GM12878 (cell line): ENCODE measurements at regions of chr18 and their contacts with region 1.

Region 1: GRCh38 chr18:3151399-3152264 is 68.1 kb downstream of the MYOM1 start:
- DNase-seq: no peak
- ATAC-seq: no peak
- H3K4me3 ChIP-seq: no peak overlapping the region
- H3K27ac ChIP-seq: no peak overlapping the region
- H3K4me1 ChIP-seq: peaks cover 12% of the 10 kb centered on the region
- H3K27me3 ChIP-seq: no peaks in the 10 kb centered on the region
- CTCF ChIP-seq: peak; percentile 56 to 72 (median 69); a peak in 5 of 6 replicates
- EP300 ChIP-seq: no peak
- POLR2A ChIP-seq: no peak
- RAD21 ChIP-seq: peak; percentile 78

Region 2: DNA sequence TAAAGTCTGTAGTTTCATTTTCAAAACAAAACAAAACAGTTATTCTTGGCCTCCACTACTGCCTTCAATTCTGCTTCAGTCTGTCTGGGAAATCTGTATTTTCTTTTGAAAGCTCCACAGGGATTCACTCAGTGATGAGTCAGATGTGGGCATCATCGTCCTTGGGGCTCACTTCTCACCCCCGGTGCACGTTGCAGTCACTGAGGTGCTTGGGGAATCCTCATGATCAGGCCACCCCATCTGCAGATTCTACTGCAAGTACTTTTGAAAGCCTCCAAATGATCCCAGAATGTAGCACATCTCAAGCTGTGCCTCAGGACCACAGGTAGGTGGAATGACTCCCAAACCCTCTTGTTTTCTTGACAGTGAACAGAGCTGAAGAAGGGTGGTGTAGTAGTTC is 173.0 kb before region 1 on chr18:
- CTCF ChIA-PET with region 1: interaction called, 11 read pairs
- POLR2A ChIA-PET with region 1: no interaction called
- RAD21 ChIA-PET with region 1: no interaction called
- SMC1A ChIA-PET with region 1: interaction called, 4 read pairs
- in situ Hi-C with region 1: no loop called
- intact Hi-C with region 1: no loop called
- DNase-seq: no peak
- ATAC-seq: peak; percentile 16
- H3K4me3 ChIP-seq: peak overlapping the region; percentile 41; the same call in 1 of the 2 replicates
- H3K27ac ChIP-seq: peak overlapping the region; percentile 70
- H3K4me1 ChIP-seq: peaks cover 41% of the 10 kb centered on the region
- H3K27me3 ChIP-seq: no peaks in the 10 kb centered on the region
- CTCF ChIP-seq: no peak
- EP300 ChIP-seq: no peak
- POLR2A ChIP-seq: no peak
- RAD21 ChIP-seq: no peak

Region 3: DNA sequence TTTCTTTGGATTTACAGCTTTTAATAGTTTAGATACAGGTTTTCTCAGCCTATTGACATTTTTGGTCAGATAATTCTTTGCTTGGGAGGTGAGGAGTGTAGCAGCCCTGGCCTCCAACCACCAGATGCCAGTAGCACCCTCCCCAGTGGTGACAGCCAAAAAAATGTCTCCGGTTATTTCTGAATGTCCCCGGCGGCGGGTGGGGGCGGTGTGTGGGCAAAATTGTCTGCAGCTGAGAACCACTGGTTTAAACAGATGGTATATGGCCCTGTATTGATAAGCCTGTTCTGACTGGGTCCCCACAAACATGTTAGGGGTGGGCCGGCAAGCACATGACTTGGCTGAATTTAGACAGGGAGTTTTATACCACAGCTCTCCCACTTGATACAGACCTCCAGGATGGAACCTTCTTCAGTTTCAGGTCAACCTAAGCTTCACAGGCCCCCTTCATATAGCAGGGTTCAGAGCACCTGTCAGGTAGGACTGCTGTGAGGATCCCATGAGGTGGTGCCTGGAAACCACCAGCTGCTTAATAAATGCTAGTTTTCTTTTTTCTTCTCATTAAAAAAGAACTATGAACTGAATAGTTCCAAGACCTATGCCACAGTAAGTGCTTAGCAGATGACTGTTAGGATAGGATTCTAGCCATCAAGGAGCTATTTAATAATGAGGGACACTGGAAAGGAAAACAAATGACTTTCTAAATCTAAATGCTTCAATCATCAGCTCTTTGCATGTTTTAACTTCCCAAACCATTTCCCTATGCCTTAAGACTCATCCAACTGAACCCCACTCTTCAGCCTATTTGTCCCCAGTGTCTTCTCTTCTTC is 156.8 kb before region 1 on chr18:
- CTCF ChIA-PET with region 1: interaction called, 36 read pairs
- POLR2A ChIA-PET with region 1: no interaction called
- RAD21 ChIA-PET with region 1: interaction called, 26 read pairs
- SMC1A ChIA-PET with region 1: interaction called, 38 read pairs
- in situ Hi-C with region 1: no loop called
- intact Hi-C with region 1: loop called (anchors 5 kb)
- DNase-seq: no peak
- ATAC-seq: peak; percentile 93
- H3K4me3 ChIP-seq: no peak overlapping the region
- H3K27ac ChIP-seq: peak overlapping the region; percentile 53; the same call in 1 of the 2 replicates
- H3K4me1 ChIP-seq: peaks cover 33% of the 10 kb centered on the region
- H3K27me3 ChIP-seq: no peaks in the 10 kb centered on the region
- CTCF ChIP-seq: peak; percentile 69 to 71 (median 70)
- EP300 ChIP-seq: no peak
- POLR2A ChIP-seq: no peak
- RAD21 ChIP-seq: peak; percentile 84

Region 4: DNA sequence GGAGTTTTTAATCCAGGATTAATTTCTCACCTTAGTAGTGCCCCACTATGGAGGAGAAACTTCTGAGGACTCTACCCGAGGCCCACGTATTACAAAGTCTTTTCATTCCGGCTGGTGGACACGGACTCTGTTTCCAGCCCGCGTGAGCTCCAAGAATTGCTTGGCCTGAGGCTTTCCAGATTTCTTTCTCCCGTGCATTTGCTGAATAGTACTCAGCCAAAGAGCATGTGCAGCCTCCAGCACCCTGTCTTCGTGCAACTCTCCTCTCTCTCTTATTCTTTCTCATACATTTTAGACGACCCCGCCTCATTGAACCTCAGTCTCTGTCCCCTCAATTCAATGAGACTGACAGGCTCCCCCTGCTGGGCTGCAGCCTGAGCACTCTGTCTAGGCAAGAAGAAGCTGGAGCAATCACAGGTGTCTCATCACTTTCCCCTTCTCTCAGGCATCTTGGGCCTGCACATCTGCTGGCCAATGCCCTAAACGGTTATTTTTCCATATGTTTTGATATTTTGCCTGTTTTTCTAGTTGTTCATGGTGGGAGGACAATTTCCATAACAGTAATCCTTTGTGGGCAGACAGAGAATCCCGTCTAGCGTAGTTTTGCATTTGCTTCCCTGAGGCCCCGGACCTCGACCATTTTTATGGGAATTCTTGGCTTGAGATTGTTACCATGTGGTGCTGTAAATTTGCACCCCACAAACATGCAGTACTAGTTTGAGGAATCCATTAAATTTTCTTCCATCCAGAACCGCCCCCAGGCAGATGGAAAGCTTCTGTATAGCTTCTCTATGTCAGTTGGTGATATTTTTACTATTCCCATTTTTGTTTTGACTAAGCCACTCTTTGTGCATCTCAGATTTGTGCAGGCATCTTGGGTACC is 88.6 kb before region 1 on chr18:
- CTCF ChIA-PET with region 1: interaction called, 10 read pairs
- POLR2A ChIA-PET with region 1: no interaction called
- RAD21 ChIA-PET with region 1: interaction called, 7 read pairs
- SMC1A ChIA-PET with region 1: interaction called, 4 read pairs
- in situ Hi-C with region 1: no loop called
- intact Hi-C with region 1: no loop called
- DNase-seq: no peak
- ATAC-seq: peak; percentile 79
- H3K4me3 ChIP-seq: no peak overlapping the region
- H3K27ac ChIP-seq: no peak overlapping the region
- H3K4me1 ChIP-seq: peaks cover 32% of the 10 kb centered on the region
- H3K27me3 ChIP-seq: no peaks in the 10 kb centered on the region
- CTCF ChIP-seq: peak; percentile 77 to 87 (median 82)
- EP300 ChIP-seq: no peak
- POLR2A ChIP-seq: no peak
- RAD21 ChIP-seq: peak; percentile 77

Region 5: GRCh38 chr18:3171631-3172030 is 20.0 kb after region 1 on chr18:
- CTCF ChIA-PET with region 1: interaction called, 23 read pairs
- POLR2A ChIA-PET with region 1: interaction called, 12 read pairs
- RAD21 ChIA-PET with region 1: interaction called, 15 read pairs
- SMC1A ChIA-PET with region 1: interaction called, 12 read pairs
- in situ Hi-C with region 1: no loop called
- intact Hi-C with region 1: no loop called
- DNase-seq: no peak
- ATAC-seq: no peak
- H3K4me3 ChIP-seq: no peak overlapping the region
- H3K27ac ChIP-seq: no peak overlapping the region; the same call in 1 of the 2 replicates
- H3K4me1 ChIP-seq: peaks cover 21% of the 10 kb centered on the region
- H3K27me3 ChIP-seq: no peaks in the 10 kb centered on the region
- CTCF ChIP-seq: no peak
- EP300 ChIP-seq: no peak
- POLR2A ChIP-seq: no peak
- RAD21 ChIP-seq: no peak

Region 6: GRCh38 chr18:3194947-3195612 is 43.4 kb after region 1 on chr18:
- CTCF ChIA-PET with region 1: interaction called, 12 read pairs
- POLR2A ChIA-PET with region 1: no interaction called
- RAD21 ChIA-PET with region 1: interaction called, 4 read pairs
- SMC1A ChIA-PET with region 1: interaction called, 4 read pairs
- in situ Hi-C with region 1: no loop called
- intact Hi-C with region 1: no loop called
- DNase-seq: no peak
- ATAC-seq: no peak
- H3K4me3 ChIP-seq: no peak overlapping the region
- H3K27ac ChIP-seq: no peak overlapping the region
- H3K4me1 ChIP-seq: no peaks in the 10 kb centered on the region
- H3K27me3 ChIP-seq: no peaks in the 10 kb centered on the region
- CTCF ChIP-seq: no peak
- EP300 ChIP-seq: no peak
- POLR2A ChIP-seq: no peak
- RAD21 ChIP-seq: no peak

Region 7: GRCh38 chr18:3230401-3231334 is 79.0 kb after region 1 on chr18:
- CTCF ChIA-PET with region 1: interaction called, 10 read pairs
- POLR2A ChIA-PET with region 1: no interaction called
- RAD21 ChIA-PET with region 1: interaction called, 3 read pairs
- SMC1A ChIA-PET with region 1: interaction called, 7 read pairs
- in situ Hi-C with region 1: no loop called
- intact Hi-C with region 1: no loop called
- DNase-seq: no peak
- ATAC-seq: peak; percentile 38; the same call in 1 of the 3 replicates
- H3K4me3 ChIP-seq: no peak overlapping the region
- H3K27ac ChIP-seq: no peak overlapping the region
- H3K4me1 ChIP-seq: no peaks in the 10 kb centered on the region
- H3K27me3 ChIP-seq: no peaks in the 10 kb centered on the region
- CTCF ChIP-seq: no peak
- EP300 ChIP-seq: no peak
- POLR2A ChIP-seq: no peak
- RAD21 ChIP-seq: no peak